ENCODE measurements at regions of chr12 and their contacts with region 1.

Region 1: GRCh38 chr12:575948-576612 is 87.2 kb downstream of the NINJ2 start:
- DNase-seq: peak; percentile 83 to 84
- ATAC-seq: peak; percentile 42 to 64; a peak in 5 of 6 replicates
- H3K4me3 ChIP-seq: no peak overlapping the region
- H3K27ac ChIP-seq: peak overlapping the region; percentile 82 to 97
- H3K4me1 ChIP-seq: peaks cover 63% of the 10 kb centered on the region
- CTCF ChIP-seq: peak; percentile 96
- EP300 ChIP-seq: no peak
- POLR2A ChIP-seq: peak; percentile 19
- RAD21 ChIP-seq: peak; percentile 84 to 96

Region 2: DNA sequence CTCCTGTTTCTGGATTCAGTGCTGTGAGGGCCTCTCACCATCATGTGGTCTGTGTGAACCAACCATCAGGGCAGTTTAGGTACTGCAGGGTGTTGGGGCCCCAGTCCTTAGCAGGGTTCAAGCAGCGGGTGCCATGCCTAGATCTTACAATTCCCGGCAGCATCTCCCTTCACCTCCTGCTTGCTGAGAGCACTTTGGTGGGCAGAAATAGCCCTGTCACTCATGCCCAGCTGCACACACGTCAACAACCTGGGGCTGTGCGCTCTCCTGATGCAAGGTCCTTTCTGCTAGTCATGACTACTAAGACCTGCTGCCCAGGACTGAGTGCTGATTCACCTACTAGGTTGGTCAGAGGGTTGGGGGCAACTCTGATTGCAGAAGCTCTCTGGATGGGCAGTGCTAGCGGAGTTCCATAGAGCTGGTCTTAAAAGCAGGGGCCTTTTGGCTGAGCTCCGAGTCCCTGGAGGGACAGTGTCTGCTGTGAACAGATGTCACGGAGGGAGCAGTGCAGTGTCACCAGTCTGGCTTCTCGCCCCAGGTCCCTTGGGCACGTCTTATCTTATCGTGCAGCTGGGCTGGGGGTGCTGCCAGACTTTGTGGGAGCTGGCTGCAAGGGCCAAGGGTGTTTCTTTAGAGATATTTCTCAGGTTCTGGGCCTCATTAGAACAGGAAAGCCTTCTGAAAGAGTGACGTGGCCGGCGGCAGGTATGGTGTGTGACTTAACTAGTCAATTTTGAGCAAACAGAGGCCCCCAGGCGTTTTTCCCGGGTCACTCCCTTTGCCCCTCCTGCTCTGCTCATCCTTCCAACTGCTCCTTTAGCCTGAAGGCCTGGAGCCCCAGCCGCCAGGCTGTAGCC is 15.3 kb after region 1 on chr12:
- CTCF ChIA-PET with region 1: interaction called, 24 read pairs
- POLR2A ChIA-PET with region 1: no interaction called
- DNase-seq: no peak
- ATAC-seq: peak; percentile 68 to 83; a peak in 5 of 6 replicates
- H3K4me3 ChIP-seq: no peak overlapping the region
- H3K27ac ChIP-seq: no peak overlapping the region
- H3K4me1 ChIP-seq: no peaks in the 10 kb centered on the region
- CTCF ChIP-seq: no peak
- EP300 ChIP-seq: no peak
- POLR2A ChIP-seq: no peak
- RAD21 ChIP-seq: no peak

Region 3: GRCh38 chr12:607526-608001 is 31.5 kb after region 1 on chr12:
- CTCF ChIA-PET with region 1: interaction called, 41 read pairs
- POLR2A ChIA-PET with region 1: interaction called, 3 read pairs
- DNase-seq: no peak
- ATAC-seq: no peak
- H3K4me3 ChIP-seq: no peak overlapping the region
- H3K27ac ChIP-seq: peak overlapping the region in 1 of 2 experiments; percentile 30; a peak in 1 of 6 replicates
- H3K4me1 ChIP-seq: peaks cover 12% of the 10 kb centered on the region
- CTCF ChIP-seq: no peak
- EP300 ChIP-seq: no peak
- POLR2A ChIP-seq: no peak
- RAD21 ChIP-seq: no peak

Region 4: GRCh38 chr12:630656-631632 is 54.9 kb after region 1 on chr12:
- CTCF ChIA-PET with region 1: interaction called, 29 read pairs
- POLR2A ChIA-PET with region 1: interaction called, 15 read pairs
- DNase-seq: no peak
- ATAC-seq: no peak
- H3K4me3 ChIP-seq: no peak overlapping the region
- H3K27ac ChIP-seq: peak overlapping the region; percentile 96 to 97
- H3K4me1 ChIP-seq: peaks cover 58% of the 10 kb centered on the region
- CTCF ChIP-seq: no peak
- EP300 ChIP-seq: no peak
- POLR2A ChIP-seq: no peak
- RAD21 ChIP-seq: no peak

Region 5: DNA sequence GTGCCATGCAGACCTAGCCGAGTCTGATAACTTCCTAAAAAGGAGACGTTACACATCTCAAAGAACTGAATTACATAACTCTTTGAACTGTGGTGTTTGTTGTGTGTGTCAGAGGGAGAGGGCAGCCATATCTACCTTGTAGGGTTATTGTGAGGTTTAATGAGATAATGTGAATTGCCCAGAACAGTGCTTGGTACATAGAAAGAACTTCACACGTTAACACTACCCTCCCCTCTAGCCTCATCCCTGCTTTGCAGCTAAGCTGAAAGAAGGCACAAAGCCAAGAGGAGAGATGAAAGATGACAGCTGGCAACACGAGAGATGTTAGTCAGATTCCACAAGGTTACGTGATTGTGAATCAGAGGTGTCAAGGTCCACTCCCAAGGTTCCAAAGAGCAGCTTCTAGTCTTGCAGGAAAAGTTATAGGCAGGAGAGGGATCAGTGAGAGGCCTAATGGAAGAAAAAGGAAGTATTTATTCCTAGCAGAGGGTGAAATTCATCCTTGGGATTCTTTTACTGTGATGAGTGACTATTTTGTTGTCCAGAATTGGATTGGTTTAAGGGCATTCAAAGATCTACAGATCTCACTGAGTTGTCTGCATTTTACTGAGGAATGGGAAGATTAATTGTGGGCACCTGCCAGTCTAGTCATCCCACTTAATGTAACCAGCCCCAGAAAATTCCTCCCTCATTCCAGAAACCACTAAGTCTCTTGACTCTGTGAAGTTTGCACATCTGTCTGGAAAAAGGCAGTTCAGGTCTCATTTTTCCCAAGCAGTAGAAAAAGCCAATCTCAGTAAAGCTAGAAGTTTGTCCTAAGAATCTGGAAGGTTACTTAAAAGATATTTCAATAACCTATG is 150.4 kb after region 1 on chr12:
- CTCF ChIA-PET with region 1: interaction called, 15 read pairs
- POLR2A ChIA-PET with region 1: no interaction called
- DNase-seq: peak; percentile 21 to 54
- ATAC-seq: peak; percentile 65 to 70; a peak in 5 of 6 replicates
- H3K4me3 ChIP-seq: no peak overlapping the region
- H3K27ac ChIP-seq: peak overlapping the region; percentile 36 to 61
- H3K4me1 ChIP-seq: peaks cover 32% of the 10 kb centered on the region
- CTCF ChIP-seq: no peak
- EP300 ChIP-seq: no peak
- POLR2A ChIP-seq: no peak
- RAD21 ChIP-seq: no peak

Region 6: DNA sequence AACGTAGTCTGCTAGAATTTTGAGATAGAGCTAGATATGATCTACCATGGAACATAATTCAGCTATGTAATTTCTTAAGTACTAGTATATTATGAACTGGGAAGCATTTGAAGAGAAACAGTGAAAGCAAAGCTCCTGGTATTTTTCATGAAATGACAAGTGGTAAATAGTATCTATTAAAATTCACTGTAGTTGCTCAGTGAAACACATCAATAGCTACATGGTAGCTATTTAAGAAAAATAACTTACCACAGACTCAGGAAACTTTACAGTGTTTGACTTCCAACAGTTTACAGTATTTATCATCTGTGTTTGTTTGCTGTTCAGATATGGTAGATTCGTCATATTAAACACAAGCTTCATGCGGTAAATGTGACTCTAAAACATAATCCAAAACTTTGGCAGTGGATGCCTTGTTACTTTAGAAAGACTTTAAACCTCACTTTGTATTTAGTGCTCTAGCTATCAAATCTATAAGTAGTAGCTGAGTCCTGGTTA is 201.5 kb after region 1 on chr12:
- CTCF ChIA-PET with region 1: interaction called, 13 read pairs
- POLR2A ChIA-PET with region 1: no interaction called
- DNase-seq: no peak
- ATAC-seq: no peak
- H3K4me3 ChIP-seq: no peak overlapping the region
- H3K27ac ChIP-seq: no peak overlapping the region
- H3K4me1 ChIP-seq: peaks cover 86% of the 10 kb centered on the region
- CTCF ChIP-seq: no peak
- EP300 ChIP-seq: no peak
- POLR2A ChIP-seq: no peak
- RAD21 ChIP-seq: no peak

Region 7: DNA sequence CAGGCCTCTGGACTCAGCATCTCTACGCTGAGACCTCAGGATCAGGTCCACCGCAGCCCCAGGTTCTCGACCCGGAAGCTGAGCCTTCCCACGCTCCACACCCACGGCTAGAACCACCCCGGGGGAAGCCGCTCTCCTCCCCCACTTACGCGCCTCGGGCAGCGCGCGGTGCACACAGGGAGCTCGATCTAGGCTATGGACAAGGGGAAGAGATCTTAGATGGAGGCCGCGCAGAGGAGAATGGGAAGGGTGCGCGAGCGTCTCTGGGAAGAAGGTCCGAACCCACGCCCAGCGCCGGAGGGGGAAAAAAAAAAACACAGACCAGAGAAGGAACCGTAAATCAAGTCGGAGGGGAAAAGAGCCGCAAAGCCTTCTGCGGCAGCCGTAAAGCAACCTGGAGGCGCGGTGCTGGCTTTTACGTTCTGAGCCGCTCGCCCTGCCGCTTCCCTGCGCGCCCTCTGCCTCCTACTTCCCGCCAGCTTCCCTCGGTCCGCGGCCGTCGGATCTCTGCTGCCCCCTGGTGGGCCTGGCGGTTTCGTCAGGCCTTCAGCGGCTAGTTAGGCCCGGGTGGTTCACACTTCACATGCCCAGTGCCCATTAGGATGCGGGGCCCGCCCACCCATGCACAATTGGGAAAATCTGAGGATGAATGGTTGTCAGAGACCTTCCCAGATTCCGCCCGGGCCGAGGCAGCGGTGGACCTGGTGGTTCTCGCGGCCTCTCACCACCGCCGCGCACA is 373.5 kb after region 1 on chr12 and contains the start of gene RAD52:
- CTCF ChIA-PET with region 1: interaction called, 48 read pairs
- POLR2A ChIA-PET with region 1: interaction called, 34 read pairs
- DNase-seq: peak; percentile 82 to 100
- ATAC-seq: peak; percentile 96 to 97
- H3K4me3 ChIP-seq: peak within 1 kb of the TSS; percentile 69
- H3K27ac ChIP-seq: peak within 1 kb of the TSS; percentile 88 to 98
- H3K4me1 ChIP-seq: peaks cover 11% of the 10 kb centered on the region; the same call in 1 of the 3 replicates
- CTCF ChIP-seq: peak; percentile 95
- EP300 ChIP-seq: no peak
- POLR2A ChIP-seq: peak; percentile 77
- RAD21 ChIP-seq: peak; percentile 87 to 94
- polyA plus RNA-seq, gene RAD52: 23.6 and 29.6 TPM in 2 replicates

Measured in A549 (cell line).